ENCODE measurements at regions of chr3 and their contacts with region 1.

Region 1: DNA sequence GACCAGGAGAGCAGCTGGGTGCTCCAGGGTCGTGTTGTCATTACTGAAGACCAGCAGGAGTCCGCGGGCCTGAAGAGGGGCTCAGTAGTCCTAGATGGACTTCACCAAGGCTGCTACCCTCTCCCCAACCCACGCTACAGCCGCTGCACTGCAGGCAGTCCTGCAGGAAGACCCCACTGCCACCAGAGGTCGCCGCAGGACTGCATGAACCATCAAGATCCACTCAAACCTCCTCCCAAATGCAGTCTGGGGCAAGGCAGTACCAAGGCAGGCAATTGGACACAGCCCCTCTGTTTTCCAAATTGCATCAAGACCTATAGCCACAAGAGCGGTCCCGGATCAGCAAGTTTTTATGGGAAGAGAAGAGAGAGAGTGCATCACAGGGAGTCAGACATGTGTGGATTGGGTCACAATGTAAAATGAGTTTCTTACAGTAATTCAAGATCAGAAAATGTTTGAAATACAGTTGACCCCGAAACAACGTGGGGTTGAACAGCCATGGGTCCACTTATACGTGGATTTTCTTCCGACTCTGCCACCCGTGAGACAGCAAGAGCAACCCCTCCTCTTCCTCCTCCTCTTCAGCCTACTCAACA is 46.7 kb downstream of the DZIP1L start:
- DNase-seq: peak; percentile 53 to 80 (median 68)
- ATAC-seq: peak; percentile 79
- H3K4me3 ChIP-seq: no peak overlapping the region
- H3K4me3 Mint-ChIP-seq: no peak overlapping the region
- H3K27ac ChIP-seq: no peak overlapping the region
- H3K27ac Mint-ChIP-seq: no peak overlapping the region
- H3K4me1 ChIP-seq: no peaks in the 10 kb centered on the region
- H3K4me1 Mint-ChIP-seq: no peaks in the 10 kb centered on the region
- H3K27me3 ChIP-seq: no peaks in the 10 kb centered on the region
- H3K27me3 Mint-ChIP-seq: peaks cover 9% of the 10 kb centered on the region
- CTCF ChIP-seq: peak; percentile 79

Region 2: GRCh38 chr3:138118612-138119422 is 50.1 kb after region 1 on chr3:
- CTCF ChIA-PET with region 1: interaction called, 15 read pairs
- POLR2A ChIA-PET with region 1: no interaction called
- intact Hi-C with region 1: loop called (anchors 1 kb)
- DNase-seq: peak in 7 of 9 experiments; percentile 24 to 56 (median 39)
- ATAC-seq: no peak
- H3K4me3 ChIP-seq: no peak overlapping the region
- H3K4me3 Mint-ChIP-seq: no peak overlapping the region
- H3K27ac ChIP-seq: no peak overlapping the region
- H3K27ac Mint-ChIP-seq: no peak overlapping the region
- H3K4me1 ChIP-seq: peaks cover 4% of the 10 kb centered on the region
- H3K4me1 Mint-ChIP-seq: peaks cover 8% of the 10 kb centered on the region
- H3K27me3 ChIP-seq: peaks cover 0 to 7% of the 10 kb centered on the region in 2 experiments
- H3K27me3 Mint-ChIP-seq: peaks cover 31% of the 10 kb centered on the region
- CTCF ChIP-seq: peak; percentile 58

Region 3: DNA sequence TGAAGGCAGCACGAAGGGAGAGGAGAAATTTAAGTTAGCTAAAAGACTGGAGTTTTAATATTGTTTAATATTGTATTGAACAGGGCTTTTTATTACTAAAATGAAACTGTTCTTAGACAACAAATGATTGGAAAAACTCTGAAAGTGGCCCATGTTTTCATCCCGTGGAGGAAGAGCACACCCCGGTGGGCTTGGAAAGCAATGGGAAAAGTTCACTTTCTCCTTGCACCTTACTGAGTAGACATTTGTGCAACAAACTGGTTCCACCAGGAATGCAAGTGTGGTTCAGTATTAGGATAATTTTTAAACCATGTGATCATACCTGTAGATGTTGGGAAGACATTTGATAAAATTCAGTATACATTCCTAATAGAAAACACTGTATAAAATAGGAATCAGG is 357.5 kb after region 1 on chr3:
- CTCF ChIA-PET with region 1: no interaction called
- POLR2A ChIA-PET with region 1: no interaction called
- intact Hi-C with region 1: loop called in 1 of 2 experiments (anchors 10 kb)
- DNase-seq: no peak
- ATAC-seq: no peak
- H3K4me3 ChIP-seq: no peak overlapping the region
- H3K4me3 Mint-ChIP-seq: no peak overlapping the region
- H3K27ac ChIP-seq: no peak overlapping the region
- H3K27ac Mint-ChIP-seq: no peak overlapping the region
- H3K4me1 ChIP-seq: no peaks in the 10 kb centered on the region
- H3K4me1 Mint-ChIP-seq: no peaks in the 10 kb centered on the region
- H3K27me3 ChIP-seq: no peaks in the 10 kb centered on the region
- H3K27me3 Mint-ChIP-seq: peaks cover 5% of the 10 kb centered on the region
- CTCF ChIP-seq: no peak

Region 4: GRCh38 chr3:138578141-138578540 is 509.5 kb after region 1 on chr3:
- CTCF ChIA-PET with region 1: no interaction called
- POLR2A ChIA-PET with region 1: no interaction called
- intact Hi-C with region 1: no loop called
- DNase-seq: peak in 2 of 9 experiments; percentile 9 to 35
- ATAC-seq: no peak
- H3K4me3 ChIP-seq: peak overlapping the region; percentile 30 to 37
- H3K4me3 Mint-ChIP-seq: peak overlapping the region; percentile 71
- H3K27ac ChIP-seq: no peak overlapping the region
- H3K27ac Mint-ChIP-seq: peak overlapping the region; percentile 30
- H3K4me1 ChIP-seq: peaks cover 4% of the 10 kb centered on the region
- H3K4me1 Mint-ChIP-seq: peaks cover 29% of the 10 kb centered on the region
- H3K27me3 ChIP-seq: no peaks in the 10 kb centered on the region
- H3K27me3 Mint-ChIP-seq: no peaks in the 10 kb centered on the region
- CTCF ChIP-seq: no peak

Region 5: DNA sequence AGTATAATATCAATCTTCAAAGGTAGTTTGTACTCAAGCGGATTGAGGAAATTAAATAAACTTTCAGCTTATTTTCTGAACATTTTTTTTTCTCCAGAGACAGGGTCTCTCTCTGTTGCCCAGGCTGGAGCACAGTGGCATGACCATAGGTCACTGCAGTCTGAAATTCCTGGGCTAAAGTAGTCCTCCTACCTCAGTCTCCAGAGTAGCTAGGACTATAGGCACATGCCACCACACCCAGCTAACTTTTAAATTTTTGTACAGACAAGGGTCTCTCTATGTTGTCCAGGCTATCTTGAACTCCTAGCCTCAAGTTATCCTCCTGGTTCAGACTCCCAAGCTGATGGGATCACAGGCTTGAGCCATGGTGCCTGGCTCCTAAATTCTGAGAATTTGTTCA is 637.0 kb after region 1 on chr3:
- CTCF ChIA-PET with region 1: no interaction called
- POLR2A ChIA-PET with region 1: no interaction called
- intact Hi-C with region 1: loop called in 1 of 2 experiments (anchors 10 kb)
- DNase-seq: no peak
- ATAC-seq: no peak
- H3K4me3 ChIP-seq: no peak overlapping the region
- H3K4me3 Mint-ChIP-seq: no peak overlapping the region
- H3K27ac ChIP-seq: no peak overlapping the region
- H3K27ac Mint-ChIP-seq: no peak overlapping the region
- H3K4me1 ChIP-seq: no peaks in the 10 kb centered on the region
- H3K4me1 Mint-ChIP-seq: no peaks in the 10 kb centered on the region
- H3K27me3 ChIP-seq: no peaks in the 10 kb centered on the region
- H3K27me3 Mint-ChIP-seq: no peaks in the 10 kb centered on the region
- CTCF ChIP-seq: no peak

Measured in CD8-positive, alpha-beta T cell (primary cell).